ENCODE measurements at regions of chr16 and their contacts with region 1.

Region 1: GRCh38 chr16:63581570-63581969 is 1540.3 kb downstream of the CDH11 start:
- DNase-seq: no peak
- ATAC-seq: no peak
- H3K4me3 ChIP-seq: no peak overlapping the region
- H3K27ac ChIP-seq: no peak overlapping the region
- H3K4me1 ChIP-seq: no peaks in the 10 kb centered on the region
- H3K27me3 ChIP-seq: no peaks in the 10 kb centered on the region
- CTCF ChIP-seq: no peak
- POLR2A ChIP-seq: no peak

Region 2: GRCh38 chr16:63652091-63652490 is 70.5 kb after region 1 on chr16:
- intact Hi-C with region 1: loop called (anchors 10 kb)
- DNase-seq: no peak
- ATAC-seq: no peak
- H3K4me3 ChIP-seq: no peak overlapping the region
- H3K27ac ChIP-seq: no peak overlapping the region
- H3K4me1 ChIP-seq: no peaks in the 10 kb centered on the region
- H3K27me3 ChIP-seq: no peaks in the 10 kb centered on the region
- CTCF ChIP-seq: no peak
- POLR2A ChIP-seq: no peak